ENCODE measurements at regions of chr19 and their contacts with region 1.

Region 1: DNA sequence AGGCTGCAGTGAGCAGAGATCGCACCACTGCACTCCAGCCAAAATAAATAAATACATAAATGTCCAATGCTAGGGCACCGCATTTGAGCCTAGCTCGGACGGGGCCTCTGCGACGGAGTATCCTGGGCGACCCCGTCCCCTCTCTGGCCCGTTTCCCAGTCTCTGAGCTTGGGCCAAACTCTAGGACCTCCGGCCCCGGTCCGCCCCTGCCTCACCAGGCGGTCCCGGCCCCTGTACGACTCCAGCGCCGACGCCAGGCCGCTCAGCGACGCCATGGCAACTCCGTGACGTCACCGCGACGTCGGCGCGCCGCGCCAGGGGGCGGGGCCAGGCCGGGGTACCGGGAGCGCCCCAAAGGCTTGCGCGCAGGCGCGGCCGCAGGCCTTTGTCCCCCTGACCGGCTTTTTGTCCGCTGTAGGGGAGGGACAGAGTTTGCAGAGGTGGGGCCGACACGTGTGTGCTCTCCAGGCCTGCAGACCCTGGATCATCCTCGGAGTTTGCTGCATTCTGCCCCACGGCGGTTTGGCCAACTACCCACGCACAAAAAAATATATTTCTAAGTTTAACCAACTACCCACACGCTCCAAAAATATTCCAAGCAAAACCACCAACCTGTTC is at the start of gene PEX11G:
- DNase-seq: peak; percentile 95
- ATAC-seq: peak; percentile 88
- H3K4me3 Mint-ChIP-seq: peak within 1 kb of the TSS; percentile 73
- H3K27ac Mint-ChIP-seq: peak within 1 kb of the TSS; percentile 76
- H3K4me1 Mint-ChIP-seq: peaks cover 20% of the 10 kb centered on the region
- H3K27me3 Mint-ChIP-seq: no peaks in the 10 kb centered on the region
- total RNA-seq, gene PEX11G: 0.51 to 1.1 TPM

Region 2: DNA sequence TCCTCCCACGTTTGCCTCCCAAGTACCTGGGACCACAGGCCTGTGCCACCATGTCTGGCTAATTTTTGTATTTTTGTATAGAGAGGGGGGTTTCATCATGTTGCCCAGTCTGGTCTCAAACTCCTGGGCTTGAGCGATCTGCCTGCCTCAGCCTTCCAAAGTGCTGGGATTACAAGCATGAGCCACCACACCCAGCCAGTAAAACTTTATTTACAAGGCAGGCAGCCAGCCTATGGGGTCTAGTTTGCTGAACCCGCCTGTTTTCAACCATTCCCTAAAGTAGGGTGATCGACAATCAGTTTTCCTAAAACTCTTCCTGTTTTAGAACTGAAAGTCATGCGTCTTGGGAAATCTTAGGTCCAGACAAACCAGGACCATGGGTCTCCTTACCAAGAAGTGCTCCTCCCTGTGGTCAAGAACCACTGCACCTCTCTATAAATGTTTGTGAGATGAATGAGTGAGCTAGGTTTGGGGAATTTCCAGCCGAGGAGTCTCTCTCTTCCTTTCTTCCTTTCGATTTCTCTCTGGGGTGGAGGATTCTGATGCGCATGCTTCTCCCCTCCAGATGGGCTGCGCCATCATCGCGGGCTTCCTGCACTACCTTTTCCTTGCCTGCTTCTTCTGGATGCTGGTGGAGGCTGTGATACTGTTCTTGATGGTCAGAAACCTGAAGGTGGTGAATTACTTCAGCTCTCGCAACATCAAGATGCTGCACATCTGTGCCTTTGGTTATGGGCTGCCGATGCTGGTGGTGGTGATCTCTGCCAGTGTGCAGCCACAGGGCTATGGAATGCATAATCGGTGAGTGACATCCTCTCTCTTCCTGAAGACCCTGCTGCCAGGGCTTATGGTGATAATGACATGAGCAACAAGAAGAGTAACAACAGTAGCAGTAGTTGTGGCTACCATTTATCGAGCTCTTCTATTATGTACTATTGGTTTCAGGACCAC is 562.8 kb before region 1 on chr19:
- CTCF ChIA-PET with region 1: no interaction called
- POLR2A ChIA-PET with region 1: no interaction called
- intact Hi-C with region 1: no loop called
- DNase-seq: peak; percentile 27
- ATAC-seq: peak; percentile 75
- H3K4me3 Mint-ChIP-seq: peak overlapping the region; percentile 6
- H3K27ac Mint-ChIP-seq: peak overlapping the region; percentile 67
- H3K4me1 Mint-ChIP-seq: peaks cover 14% of the 10 kb centered on the region
- H3K27me3 Mint-ChIP-seq: no peaks in the 10 kb centered on the region

Region 3: GRCh38 chr19:7386308-7386707 is 102.5 kb before region 1 on chr19:
- CTCF ChIA-PET with region 1: no interaction called
- POLR2A ChIA-PET with region 1: no interaction called
- intact Hi-C with region 1: loop called in 1 of 2 experiments (anchors 2 kb)
- DNase-seq: peak; percentile 62
- ATAC-seq: peak; percentile 67
- H3K4me3 Mint-ChIP-seq: no peak overlapping the region
- H3K27ac Mint-ChIP-seq: peak overlapping the region; percentile 87
- H3K4me1 Mint-ChIP-seq: peaks cover 20% of the 10 kb centered on the region
- H3K27me3 Mint-ChIP-seq: no peaks in the 10 kb centered on the region

Region 4: GRCh38 chr19:7394731-7395359 is 94.0 kb before region 1 on chr19:
- CTCF ChIA-PET with region 1: no interaction called
- POLR2A ChIA-PET with region 1: no interaction called
- intact Hi-C with region 1: loop called in 1 of 2 experiments (anchors 2 kb)
- DNase-seq: peak; percentile 94
- ATAC-seq: peak; percentile 86
- H3K4me3 Mint-ChIP-seq: peak overlapping the region; percentile 83
- H3K27ac Mint-ChIP-seq: peak overlapping the region; percentile 78
- H3K4me1 Mint-ChIP-seq: peaks cover 36% of the 10 kb centered on the region
- H3K27me3 Mint-ChIP-seq: no peaks in the 10 kb centered on the region

Region 5: DNA sequence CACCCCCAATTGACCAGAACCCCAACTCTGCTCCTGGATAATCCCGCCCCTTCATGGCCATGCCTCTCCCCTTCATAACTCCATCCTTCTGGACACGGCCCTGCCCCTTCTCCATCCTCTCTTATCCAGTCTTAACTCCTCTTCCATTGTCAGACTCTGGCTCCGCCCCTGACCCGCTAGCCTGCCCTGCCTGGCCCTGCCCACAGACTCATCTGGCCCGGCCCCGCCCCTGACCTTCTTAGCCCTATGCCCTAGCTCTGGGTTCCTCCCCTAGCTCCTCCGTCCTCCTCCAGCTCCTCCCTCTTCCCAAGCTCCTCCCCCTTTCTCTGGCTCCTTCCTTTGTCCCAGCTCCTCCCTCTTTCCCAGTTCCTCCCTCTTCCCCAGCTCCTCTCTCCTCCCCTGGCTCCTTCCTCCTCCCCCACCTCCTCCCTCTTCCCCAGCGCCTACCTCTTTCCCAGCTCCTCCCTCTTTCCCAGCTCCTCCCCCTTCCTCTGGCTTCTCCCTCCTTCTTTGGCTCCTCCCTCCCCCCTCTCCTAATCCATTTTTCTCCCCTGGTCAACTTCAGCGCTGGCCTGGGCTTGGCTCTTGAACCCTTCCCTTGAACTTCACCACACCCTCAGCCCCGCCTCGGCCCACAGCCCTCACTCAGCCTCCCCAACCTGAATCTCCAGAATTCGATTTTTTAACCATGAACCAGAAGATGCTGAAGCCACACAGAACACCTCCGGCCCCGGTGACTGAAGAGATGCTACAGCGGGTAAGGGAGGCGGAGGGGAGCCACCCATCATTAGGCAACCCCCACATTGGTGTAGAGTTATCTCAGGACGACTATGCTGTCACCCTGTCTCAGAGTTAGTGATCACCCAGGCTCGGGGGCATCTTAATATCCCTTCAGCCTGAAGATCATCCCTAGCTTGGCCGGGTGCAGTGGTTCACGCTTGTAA is 17.8 kb after region 1 on chr19:
- CTCF ChIA-PET with region 1: no interaction called
- POLR2A ChIA-PET with region 1: interaction called, 3 read pairs
- intact Hi-C with region 1: loop called in 1 of 2 experiments (anchors 1 kb)
- DNase-seq: peak; percentile 81
- ATAC-seq: peak; percentile 85
- H3K4me3 Mint-ChIP-seq: no peak overlapping the region
- H3K27ac Mint-ChIP-seq: no peak overlapping the region
- H3K4me1 Mint-ChIP-seq: peaks cover 13% of the 10 kb centered on the region
- H3K27me3 Mint-ChIP-seq: peaks cover 28% of the 10 kb centered on the region

Region 6: DNA sequence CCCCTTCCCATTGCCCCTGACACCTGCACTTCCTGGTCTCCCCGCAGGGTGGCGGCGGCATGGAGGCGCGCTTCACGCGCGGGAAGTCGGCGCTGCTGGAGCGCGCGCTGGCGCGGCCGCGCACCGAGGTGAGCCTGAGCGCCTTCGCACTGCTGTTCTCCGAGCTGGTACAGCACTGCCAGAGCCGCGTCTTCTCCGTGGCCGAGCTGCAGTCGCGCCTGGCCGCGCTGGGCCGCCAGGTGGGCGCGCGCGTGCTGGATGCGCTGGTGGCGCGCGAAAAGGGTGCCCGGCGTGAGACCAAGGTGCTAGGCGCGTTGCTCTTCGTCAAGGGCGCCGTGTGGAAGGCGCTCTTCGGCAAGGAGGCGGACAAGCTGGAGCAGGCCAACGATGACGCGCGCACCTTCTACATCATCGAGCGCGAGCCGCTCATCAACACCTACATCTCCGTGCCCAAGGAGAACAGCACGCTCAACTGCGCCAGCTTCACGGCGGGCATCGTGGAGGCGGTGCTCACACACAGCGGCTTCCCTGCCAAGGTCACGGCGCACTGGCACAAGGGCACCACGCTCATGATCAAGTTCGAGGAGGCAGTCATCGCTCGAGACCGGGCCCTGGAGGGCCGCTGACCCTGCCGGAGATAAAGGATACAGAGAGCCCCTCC is 193.5 kb after region 1 on chr19:
- CTCF ChIA-PET with region 1: no interaction called
- POLR2A ChIA-PET with region 1: no interaction called
- intact Hi-C with region 1: no loop called
- DNase-seq: no peak
- ATAC-seq: no peak
- H3K4me3 Mint-ChIP-seq: peak overlapping the region; percentile 91
- H3K27ac Mint-ChIP-seq: no peak overlapping the region
- H3K4me1 Mint-ChIP-seq: peaks cover 36% of the 10 kb centered on the region
- H3K27me3 Mint-ChIP-seq: peaks cover 10% of the 10 kb centered on the region

Region 7: DNA sequence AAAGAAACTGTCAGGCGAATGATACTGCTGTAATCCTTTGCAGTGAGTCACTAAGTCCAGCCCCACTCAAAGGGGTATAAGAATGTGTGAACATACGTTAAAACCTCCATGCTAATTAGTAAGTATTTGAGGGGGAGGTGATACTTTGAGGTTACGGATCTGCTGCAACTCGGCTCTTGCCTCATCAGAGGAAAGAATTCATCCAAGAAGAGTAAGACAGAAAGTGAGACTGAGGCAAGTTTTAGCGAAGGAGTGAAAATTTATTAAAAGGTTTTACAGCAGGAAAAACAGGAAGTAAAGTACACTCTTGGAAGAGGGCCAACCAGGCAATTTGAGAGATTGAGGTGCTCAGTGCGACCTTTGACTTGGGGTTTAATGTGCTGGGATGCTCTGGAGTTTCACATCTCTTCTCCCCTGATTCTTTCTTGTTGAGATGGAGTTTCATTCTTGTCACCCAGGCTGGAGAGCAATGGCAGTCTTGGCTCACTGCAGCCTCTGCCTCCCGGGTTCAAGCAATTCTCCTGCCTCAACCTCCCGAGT is 284.0 kb after region 1 on chr19:
- CTCF ChIA-PET with region 1: no interaction called
- POLR2A ChIA-PET with region 1: no interaction called
- intact Hi-C with region 1: loop called in 1 of 2 experiments (anchors 2 kb)
- DNase-seq: peak; percentile 64
- ATAC-seq: peak; percentile 97
- H3K4me3 Mint-ChIP-seq: peak overlapping the region; percentile 13
- H3K27ac Mint-ChIP-seq: peak overlapping the region; percentile 85
- H3K4me1 Mint-ChIP-seq: peaks cover 27% of the 10 kb centered on the region
- H3K27me3 Mint-ChIP-seq: peaks cover 31% of the 10 kb centered on the region

Measured in activated CD4-positive, alpha-beta T cell treated with anti-CD3 and anti-CD28 coated beads for 36 hours (primary cell).